ENCODE measurements at regions of chr11 and their contacts with region 1.

Region 1: DNA sequence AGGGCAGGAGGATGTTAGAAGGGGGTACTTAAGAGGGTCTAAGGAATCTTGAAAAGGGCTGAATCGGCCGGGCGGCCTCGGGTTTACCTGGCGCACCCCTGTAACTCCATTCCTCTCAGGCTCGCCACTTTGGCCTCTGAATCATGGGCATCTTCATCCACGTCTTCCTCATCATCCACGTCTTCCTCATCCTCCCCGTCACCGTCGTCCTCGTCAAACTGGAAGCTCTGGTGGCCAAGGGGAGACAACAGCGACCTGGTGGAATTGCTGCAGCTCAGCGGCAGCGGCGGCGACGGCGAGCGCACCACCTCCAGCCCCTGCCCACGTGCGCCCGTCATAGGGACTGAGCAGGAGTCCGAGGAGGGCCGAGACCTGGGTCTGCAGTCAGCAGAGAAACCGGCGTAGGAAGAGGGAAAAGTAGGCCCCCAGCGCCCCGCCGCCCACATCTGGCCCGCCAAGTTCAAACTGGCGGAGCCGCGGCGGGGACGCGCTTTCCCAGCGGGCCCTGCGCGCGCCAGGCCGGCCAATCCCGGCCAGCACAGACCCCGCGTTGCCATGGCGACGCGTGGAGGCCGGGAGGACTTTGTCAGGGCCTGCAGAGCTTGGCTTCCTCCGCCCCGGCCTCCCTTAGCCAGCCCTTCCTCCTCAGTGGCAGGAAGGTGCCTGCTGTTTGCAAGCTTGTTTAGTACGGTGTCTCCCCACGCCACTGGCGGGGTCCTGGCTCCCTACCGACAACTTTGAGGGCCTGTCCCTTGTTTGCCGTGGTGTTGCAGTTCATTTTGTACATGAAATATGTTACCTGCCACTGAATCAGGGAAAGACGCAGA is at the start of gene CCDC34:
- DNase-seq: peak; percentile 90
- H3K4me3 ChIP-seq: peak within 1 kb of the TSS; percentile 50 to 93 (median 53)
- H3K27ac ChIP-seq: no peak within 1 kb of the TSS
- H3K4me1 ChIP-seq: peaks cover 8% of the 10 kb centered on the region
- H3K27me3 ChIP-seq: no peaks in the 10 kb centered on the region
- CTCF ChIP-seq: no peak
- POLR2A ChIP-seq: peak; percentile 77
- total RNA-seq, gene CCDC34: 11.4 and 11.8 TPM in 2 replicates

Region 2: GRCh38 chr11:27216270-27217149 is 146.5 kb before region 1 on chr11:
- CTCF ChIA-PET with region 1: no interaction called
- POLR2A ChIA-PET with region 1: no interaction called
- dilution Hi-C with region 1: no loop called
- intact Hi-C with region 1: loop called (anchors 2 kb)
- DNase-seq: peak; percentile 90
- H3K4me3 ChIP-seq: no peak overlapping the region
- H3K27ac ChIP-seq: no peak overlapping the region
- H3K4me1 ChIP-seq: peaks cover 23% of the 10 kb centered on the region
- H3K27me3 ChIP-seq: peaks cover 48% of the 10 kb centered on the region in 2 experiments
- CTCF ChIP-seq: no peak
- POLR2A ChIP-seq: peak; percentile 7

Region 3: GRCh38 chr11:27429761-27430412 is 66.9 kb after region 1 on chr11:
- CTCF ChIA-PET with region 1: no interaction called
- POLR2A ChIA-PET with region 1: no interaction called
- dilution Hi-C with region 1: no loop called
- intact Hi-C with region 1: no loop called
- DNase-seq: no peak
- H3K4me3 ChIP-seq: no peak overlapping the region
- H3K27ac ChIP-seq: no peak overlapping the region
- H3K4me1 ChIP-seq: no peaks in the 10 kb centered on the region
- H3K27me3 ChIP-seq: peaks cover 0 to 3% of the 10 kb centered on the region in 2 experiments
- CTCF ChIP-seq: no peak
- POLR2A ChIP-seq: no peak

Region 4: GRCh38 chr11:27472398-27473016 is 109.5 kb after region 1 on chr11 and contains the start of gene LGR4:
- CTCF ChIA-PET with region 1: interaction called, 4 read pairs
- POLR2A ChIA-PET with region 1: interaction called, 3 read pairs
- dilution Hi-C with region 1: no loop called
- intact Hi-C with region 1: loop called (anchors 2 kb)
- DNase-seq: peak; percentile 96
- H3K4me3 ChIP-seq: peak within 1 kb of the TSS; percentile 44 to 94 (median 73)
- H3K27ac ChIP-seq: no peak within 1 kb of the TSS
- H3K4me1 ChIP-seq: peaks cover 14% of the 10 kb centered on the region
- H3K27me3 ChIP-seq: peaks cover 0 to 2% of the 10 kb centered on the region in 2 experiments
- CTCF ChIP-seq: no peak
- POLR2A ChIP-seq: peak; percentile 52
- total RNA-seq, gene LGR4: 2.6 and 3.1 TPM in 2 replicates

Measured in endothelial cell of umbilical vein (primary cell).